Naive thymus-derived CD4-positive, alpha-beta T cell (primary cell): ENCODE measurements at regions of chr14 and their contacts with region 1.

Region 1: GRCh38 chr14:71036446-71036845 is 129.2 kb downstream of the PCNX1 start:
- DNase-seq: no peak
- ATAC-seq: no peak
- H3K4me3 ChIP-seq: no peak overlapping the region
- H3K4me3 Mint-ChIP-seq: no peak overlapping the region
- H3K27ac ChIP-seq: no peak overlapping the region
- H3K27ac Mint-ChIP-seq: no peak overlapping the region
- H3K4me1 ChIP-seq: no peaks in the 10 kb centered on the region
- H3K4me1 Mint-ChIP-seq: peaks cover 0 to 9% (median 0%) of the 10 kb centered on the region in 7 donors
- H3K27me3 ChIP-seq: no peaks in the 10 kb centered on the region
- H3K27me3 Mint-ChIP-seq: no peaks in the 10 kb centered on the region

Region 2: GRCh38 chr14:71050204-71050823 is 13.9 kb after region 1 on chr14:
- CTCF ChIA-PET with region 1: no interaction called
- POLR2A ChIA-PET with region 1: interaction called, 12 read pairs
- intact Hi-C with region 1: loop called in 1 of 2 experiments (anchors 2 kb)
- DNase-seq: peak in 1 of 9 donors; percentile 3
- ATAC-seq: peak; percentile 51
- H3K4me3 ChIP-seq: no peak overlapping the region
- H3K4me3 Mint-ChIP-seq: no peak overlapping the region
- H3K27ac ChIP-seq: no peak overlapping the region
- H3K27ac Mint-ChIP-seq: no peak overlapping the region
- H3K4me1 ChIP-seq: no peaks in the 10 kb centered on the region
- H3K4me1 Mint-ChIP-seq: peaks cover 0 to 25% (median 15%) of the 10 kb centered on the region in 7 donors
- H3K27me3 ChIP-seq: no peaks in the 10 kb centered on the region
- H3K27me3 Mint-ChIP-seq: no peaks in the 10 kb centered on the region

Region 3: DNA sequence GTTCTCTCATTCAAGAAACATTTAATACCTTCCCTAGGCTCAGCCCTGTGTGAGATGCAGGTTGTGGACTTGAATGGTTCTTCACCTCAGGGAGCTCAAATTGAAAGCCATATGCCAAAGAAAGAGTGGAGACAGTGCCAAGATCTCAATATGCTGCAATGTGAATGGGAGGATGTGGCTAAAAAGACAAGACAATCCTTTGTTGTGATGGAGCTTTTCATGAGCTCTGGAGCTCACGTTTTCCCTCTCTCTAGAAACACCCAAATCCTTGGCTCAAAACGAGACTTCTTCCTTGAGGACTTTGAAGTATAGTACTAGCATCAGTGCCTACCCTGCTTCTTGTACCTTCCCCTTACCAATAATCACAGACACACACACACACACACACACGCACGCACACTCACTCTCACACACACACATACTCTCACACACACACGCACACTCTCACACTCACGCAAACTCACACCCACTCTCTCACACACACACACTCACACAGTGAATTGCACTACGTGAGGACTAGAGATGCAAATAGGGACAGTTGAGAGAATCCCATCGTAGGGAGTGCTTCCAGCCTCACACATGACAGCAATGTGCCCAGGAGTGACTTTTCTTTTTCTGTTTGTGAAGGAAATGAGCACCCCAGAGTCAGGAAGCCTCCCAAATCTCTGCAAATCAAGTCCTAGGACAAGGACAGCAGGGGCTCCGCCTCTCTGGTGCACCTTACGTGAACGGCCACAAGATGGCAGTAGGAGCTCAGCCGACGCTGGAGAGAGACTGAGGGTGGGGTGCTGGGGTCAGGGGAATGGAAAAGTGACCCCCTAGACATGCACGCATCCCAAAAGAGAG is 102.2 kb after region 1 on chr14:
- CTCF ChIA-PET with region 1: no interaction called
- POLR2A ChIA-PET with region 1: no interaction called
- intact Hi-C with region 1: no loop called
- DNase-seq: peak; percentile 20 to 64 (median 46)
- ATAC-seq: peak; percentile 72
- H3K4me3 ChIP-seq: no peak overlapping the region
- H3K4me3 Mint-ChIP-seq: no peak overlapping the region
- H3K27ac ChIP-seq: no peak overlapping the region
- H3K27ac Mint-ChIP-seq: peak overlapping the region in 2 of 9 donors; percentile 1 to 36
- H3K4me1 ChIP-seq: peaks cover 7 to 20% of the 10 kb centered on the region in 2 donors
- H3K4me1 Mint-ChIP-seq: peaks cover 0 to 54% (median 6%) of the 10 kb centered on the region in 7 donors
- H3K27me3 ChIP-seq: no peaks in the 10 kb centered on the region
- H3K27me3 Mint-ChIP-seq: peaks cover 0 to 3% (median 0%) of the 10 kb centered on the region in 5 donors

Region 4: DNA sequence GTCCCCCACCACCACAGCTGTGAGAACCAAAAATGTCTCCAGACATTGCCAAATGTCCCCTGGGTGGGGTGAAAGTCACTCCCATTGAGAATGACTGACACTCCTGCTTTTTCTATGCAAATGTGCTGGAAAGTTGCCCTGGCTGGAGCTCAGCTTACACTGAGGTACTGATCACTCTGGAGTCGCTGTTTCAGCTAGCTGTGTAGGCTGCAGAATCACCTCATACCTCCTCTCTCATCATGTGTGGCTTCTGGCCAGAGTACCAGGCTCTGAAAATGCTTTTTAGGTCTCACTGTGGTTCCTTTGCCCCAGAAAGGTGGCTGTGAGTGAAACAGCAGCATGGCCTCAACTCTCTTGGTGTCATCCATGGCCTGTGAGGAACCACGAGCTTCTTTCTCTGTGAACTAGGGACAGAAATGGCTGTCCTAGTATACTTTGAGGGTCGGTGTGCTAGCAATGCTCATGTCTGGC is 1443.0 kb after region 1 on chr14:
- CTCF ChIA-PET with region 1: no interaction called
- POLR2A ChIA-PET with region 1: no interaction called
- intact Hi-C with region 1: no loop called
- DNase-seq: peak in 1 of 9 donors; percentile 23
- ATAC-seq: no peak
- H3K4me3 ChIP-seq: no peak overlapping the region
- H3K4me3 Mint-ChIP-seq: peak overlapping the region in 2 of 10 donors; percentile 41 to 47
- H3K27ac ChIP-seq: no peak overlapping the region
- H3K27ac Mint-ChIP-seq: peak overlapping the region in 1 of 9 donors; percentile 82
- H3K4me1 ChIP-seq: peaks cover 10 to 21% of the 10 kb centered on the region in 2 donors
- H3K4me1 Mint-ChIP-seq: peaks cover 29 to 85% (median 45%) of the 10 kb centered on the region in 7 donors
- H3K27me3 ChIP-seq: no peaks in the 10 kb centered on the region
- H3K27me3 Mint-ChIP-seq: peaks cover 0 to 3% (median 0%) of the 10 kb centered on the region in 5 donors